ENCODE measurements at regions of chr14 and their contacts with region 1.

Region 1: GRCh38 chr14:69818757-69819191 is 21.7 kb upstream of the SLC10A1 start:
- DNase-seq: no peak
- ATAC-seq: peak; percentile 50

Region 2: GRCh38 chr14:70027785-70028428 is 209.1 kb after region 1 on chr14:
- intact Hi-C with region 1: loop called (anchors 2 kb)
- DNase-seq: peak; percentile 88
- ATAC-seq: peak; percentile 53

Region 3: DNA sequence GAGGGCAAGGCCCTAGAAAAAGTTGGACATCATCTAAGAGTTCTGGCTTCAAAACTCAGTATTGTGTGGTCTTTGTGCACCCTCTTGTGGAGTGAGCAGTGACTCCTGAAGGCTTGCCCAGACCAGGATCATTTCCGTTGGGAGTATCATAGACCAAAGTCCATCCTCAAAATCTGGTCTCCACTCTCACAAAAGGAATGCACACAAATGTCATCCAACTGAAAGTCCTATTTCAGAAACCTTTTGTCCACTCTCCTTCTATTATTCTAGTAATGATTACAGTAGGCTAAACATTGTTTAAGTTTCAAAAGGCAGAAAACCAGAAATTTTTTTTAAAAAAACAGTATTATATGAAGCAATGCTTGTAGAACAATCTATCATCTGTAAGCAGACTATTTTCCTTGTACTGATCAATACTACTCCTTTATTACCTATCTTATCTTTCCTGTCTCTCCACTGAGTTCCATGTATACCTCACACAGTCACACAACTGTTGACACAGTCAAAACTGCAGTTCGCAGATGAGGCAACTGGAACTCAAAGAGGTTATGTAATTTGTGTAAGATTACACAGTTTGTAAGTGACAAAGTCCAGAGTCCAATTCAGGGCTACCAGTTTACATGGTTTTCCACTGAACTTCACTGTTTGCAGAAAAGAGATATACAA is 499.3 kb after region 1 on chr14:
- intact Hi-C with region 1: loop called (anchors 10 kb)
- DNase-seq: no peak
- ATAC-seq: no peak

Measured in Right ventricle myocardium inferior (tissue), 1 donor.